ENCODE measurements at regions of chr17 and their contacts with region 1.

Region 1: DNA sequence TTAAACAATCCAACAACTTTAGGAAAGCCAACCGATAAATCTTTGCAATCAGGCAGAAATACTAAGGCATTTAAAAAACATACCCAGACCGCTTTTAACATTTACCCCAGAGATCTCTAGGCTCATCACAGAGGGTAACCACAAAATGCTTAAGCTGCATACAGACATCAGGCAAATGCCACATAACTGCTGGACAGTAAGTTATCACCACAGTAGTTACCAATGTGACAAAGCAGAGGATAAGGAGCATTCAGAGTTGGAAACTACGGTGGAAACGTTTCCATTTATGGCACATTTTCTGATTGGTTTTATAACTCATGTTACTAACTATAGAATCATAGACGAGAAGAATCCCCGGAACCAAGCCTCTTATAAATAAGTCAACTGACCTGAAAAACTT is 77.5 kb downstream of the KANSL1 start:
- DNase-seq: no peak
- H3K4me3 ChIP-seq: no peak overlapping the region
- H3K27ac ChIP-seq: no peak overlapping the region
- H3K4me1 ChIP-seq: peaks cover 6 to 94% (median 56%) of the 10 kb centered on the region in 6 donors
- H3K27me3 ChIP-seq: no peaks in the 10 kb centered on the region
- CTCF ChIP-seq: no peak
- POLR2A ChIP-seq: no peak

Region 2: GRCh38 chr17:45894022-45894784 is 221.5 kb before region 1 on chr17 and contains the start of gene MAPT:
- intact Hi-C with region 1: no loop called
- DNase-seq: peak; percentile 96
- H3K4me3 ChIP-seq: peak within 1 kb of the TSS; percentile 53 to 95 (median 73)
- H3K27ac ChIP-seq: peak within 1 kb of the TSS in 6 of 8 donors; percentile 36 to 72 (median 64)
- H3K4me1 ChIP-seq: peaks cover 20 to 44% (median 34%) of the 10 kb centered on the region in 6 donors
- H3K27me3 ChIP-seq: peaks cover 3 to 62% (median 45%) of the 10 kb centered on the region in 7 donors
- CTCF ChIP-seq: peak in 10 of 11 experiments; percentile 38 to 98 (median 94)
- POLR2A ChIP-seq: no peak
- total RNA-seq, gene MAPT: 0.32 to 1.6 (median 0.68) TPM

Region 3: GRCh38 chr17:46154151-46154816 is 38.6 kb after region 1 on chr17:
- intact Hi-C with region 1: loop called (anchors 5 kb)
- DNase-seq: no peak
- H3K4me3 ChIP-seq: peak overlapping the region in 1 of 8 donors; percentile 21
- H3K27ac ChIP-seq: peak overlapping the region in 4 of 8 donors; percentile 7 to 60 (median 38)
- H3K4me1 ChIP-seq: peaks cover 63 to 100% (median 99%) of the 10 kb centered on the region in 6 donors
- H3K27me3 ChIP-seq: no peaks in the 10 kb centered on the region
- CTCF ChIP-seq: no peak
- POLR2A ChIP-seq: no peak

Region 4: DNA sequence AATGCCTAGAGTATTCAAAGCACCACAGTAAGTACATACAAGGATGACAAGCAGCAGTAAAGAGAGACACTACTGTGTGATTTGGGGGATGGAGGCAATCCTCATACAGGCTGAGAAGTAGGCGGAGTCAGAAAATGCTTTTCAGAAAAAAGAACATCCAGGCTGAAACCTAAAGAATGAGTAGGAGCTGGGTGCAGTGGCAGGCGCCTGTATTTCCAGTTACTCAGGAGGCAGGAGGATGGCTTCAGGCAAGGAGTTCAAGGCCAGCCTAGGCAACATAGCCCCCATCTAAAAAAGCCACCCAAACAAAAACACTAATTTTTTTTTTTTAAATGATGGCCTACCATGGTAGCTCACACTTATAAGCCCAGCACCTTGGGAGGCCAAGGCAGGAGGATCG is 67.3 kb after region 1 on chr17:
- intact Hi-C with region 1: loop called (anchors 10 kb)
- DNase-seq: no peak
- H3K4me3 ChIP-seq: no peak overlapping the region
- H3K27ac ChIP-seq: no peak overlapping the region
- H3K4me1 ChIP-seq: peaks cover 84 to 100% (median 98%) of the 10 kb centered on the region in 6 donors
- H3K27me3 ChIP-seq: no peaks in the 10 kb centered on the region
- CTCF ChIP-seq: no peak
- POLR2A ChIP-seq: no peak

Region 5: GRCh38 chr17:46202424-46202823 is 86.7 kb after region 1 on chr17:
- intact Hi-C with region 1: no loop called
- DNase-seq: no peak
- H3K4me3 ChIP-seq: no peak overlapping the region
- H3K27ac ChIP-seq: no peak overlapping the region
- H3K4me1 ChIP-seq: peaks cover 0 to 14% (median 2%) of the 10 kb centered on the region in 6 donors
- H3K27me3 ChIP-seq: no peaks in the 10 kb centered on the region
- CTCF ChIP-seq: no peak
- POLR2A ChIP-seq: no peak